GM13977 (cell line): ENCODE measurements at regions of chr1 and their contacts with region 1.

Region 1: DNA sequence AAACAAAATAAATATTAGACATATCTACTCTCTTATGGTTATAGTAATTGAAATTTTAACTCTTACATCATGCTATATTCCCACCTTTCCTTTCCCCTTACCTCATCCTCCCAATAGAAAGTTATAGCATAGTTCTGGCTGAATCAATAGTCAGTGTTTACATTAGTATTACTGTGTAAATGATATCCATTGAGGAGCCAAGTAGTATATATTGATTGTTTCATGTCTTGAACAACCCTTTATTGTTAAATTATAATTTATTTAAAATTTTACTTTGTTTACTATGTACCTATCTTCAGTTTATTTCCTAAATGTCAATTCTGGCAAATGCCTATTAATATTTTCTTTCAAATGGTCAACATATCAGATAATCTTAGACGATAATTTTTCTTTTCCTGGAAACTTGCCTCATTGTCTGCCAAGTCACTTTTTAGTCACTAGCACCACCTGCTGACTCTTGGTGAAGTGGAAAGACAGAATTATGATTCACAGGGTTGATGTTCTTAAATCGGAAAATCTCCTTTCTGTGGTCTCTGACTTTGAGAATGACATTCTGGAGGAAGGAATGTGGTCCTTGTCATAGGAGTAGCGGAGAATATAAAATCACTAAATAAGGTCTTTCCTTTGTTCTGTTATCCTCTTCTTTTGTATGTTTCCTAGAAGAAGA is 8.7 kb downstream of the HJV start:
- DNase-seq: peak; percentile 71
- CTCF ChIP-seq: peak; percentile 84

Region 2: GRCh38 chr1:145885738-145886287 is 127.1 kb before region 1 on chr1 and contains the start of gene ANKRD35:
- in situ Hi-C with region 1: loop called (anchors 25 kb)
- DNase-seq: peak; percentile 96
- CTCF ChIP-seq: no peak

Region 3: GRCh38 chr1:145957443-145958319 is 55.2 kb before region 1 on chr1 and contains the start of gene LIX1L:
- in situ Hi-C with region 1: no loop called
- DNase-seq: peak; percentile 97
- CTCF ChIP-seq: no peak

Region 4: DNA sequence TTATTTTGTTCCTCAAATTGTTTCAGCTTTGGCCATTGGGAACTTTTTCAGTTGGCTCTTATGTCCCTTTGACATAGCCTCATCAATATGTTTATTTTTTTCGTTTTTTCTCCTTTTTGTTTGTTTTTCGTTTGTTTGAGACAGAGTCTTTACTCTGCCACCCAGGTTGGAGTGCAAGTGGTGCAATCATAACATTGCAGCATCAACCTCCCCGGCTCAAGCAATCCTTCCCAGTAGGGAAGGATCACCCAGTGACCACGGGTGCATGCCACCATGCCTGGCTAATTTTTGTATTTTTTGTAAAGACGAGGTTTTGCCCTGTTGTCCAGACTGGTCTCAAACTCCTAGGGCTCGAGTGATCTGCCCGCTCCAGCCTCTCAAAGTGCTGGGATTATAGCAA is 40.3 kb before region 1 on chr1:
- in situ Hi-C with region 1: loop called (anchors 5 kb)
- DNase-seq: no peak
- CTCF ChIP-seq: no peak